Gastrocnemius medialis (tissue), 4 donors: ENCODE measurements at regions of chr4 and their contacts with region 1.

Region 1: GRCh38 chr4:56786955-56787354 is 34.5 kb downstream of the SPINK2 start:
- DNase-seq: peak in 1 of 2 donors; percentile 14
- ATAC-seq: no peak
- H3K4me3 ChIP-seq: no peak overlapping the region
- H3K27ac ChIP-seq: no peak overlapping the region
- H3K4me1 ChIP-seq: no peaks in the 10 kb centered on the region
- H3K27me3 ChIP-seq: peaks cover 0 to 2% (median 0%) of the 10 kb centered on the region in 3 donors
- CTCF ChIP-seq: no peak
- POLR2A ChIP-seq: no peak

Region 2: GRCh38 chr4:56712049-56712448 is 74.9 kb before region 1 on chr4:
- in situ Hi-C with region 1: no loop called
- intact Hi-C with region 1: no loop called
- DNase-seq: no peak
- ATAC-seq: no peak
- H3K4me3 ChIP-seq: no peak overlapping the region
- H3K27ac ChIP-seq: no peak overlapping the region
- H3K4me1 ChIP-seq: no peaks in the 10 kb centered on the region
- H3K27me3 ChIP-seq: no peaks in the 10 kb centered on the region
- CTCF ChIP-seq: no peak
- POLR2A ChIP-seq: no peak

Region 3: DNA sequence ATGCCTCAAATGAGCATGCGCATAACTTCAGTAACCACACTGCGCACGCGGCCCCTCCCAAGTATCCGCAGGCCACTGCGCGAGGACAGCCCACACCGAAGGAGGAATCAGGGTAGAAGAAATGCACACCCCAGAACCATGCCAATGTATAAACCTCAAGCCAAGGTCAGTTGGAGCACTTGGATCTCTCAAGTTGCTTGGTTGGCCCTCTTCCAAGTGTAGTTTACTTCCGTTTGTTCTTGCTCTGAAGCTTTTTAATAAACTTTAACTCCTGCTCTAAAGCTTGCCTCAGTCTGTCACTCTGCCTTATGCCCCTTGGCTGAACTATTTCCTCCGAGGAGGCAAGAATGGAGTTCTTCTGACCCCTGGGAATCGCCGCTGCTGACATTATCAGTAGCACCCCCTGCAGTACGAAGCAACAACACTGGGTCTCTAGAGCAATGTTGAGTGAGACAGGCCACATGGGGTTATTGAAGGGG is 56.5 kb after region 1 on chr4:
- in situ Hi-C with region 1: loop called in 1 of 4 experiments (anchors 10 kb)
- intact Hi-C with region 1: no loop called
- DNase-seq: no peak
- ATAC-seq: no peak
- H3K4me3 ChIP-seq: no peak overlapping the region
- H3K27ac ChIP-seq: no peak overlapping the region
- H3K4me1 ChIP-seq: no peaks in the 10 kb centered on the region
- H3K27me3 ChIP-seq: no peaks in the 10 kb centered on the region
- CTCF ChIP-seq: no peak
- POLR2A ChIP-seq: no peak

Region 4: GRCh38 chr4:57190601-57191481 is 403.9 kb after region 1 on chr4:
- in situ Hi-C with region 1: no loop called
- intact Hi-C with region 1: no loop called
- DNase-seq: no peak
- ATAC-seq: no peak
- H3K4me3 ChIP-seq: no peak overlapping the region
- H3K27ac ChIP-seq: no peak overlapping the region
- H3K4me1 ChIP-seq: no peaks in the 10 kb centered on the region
- H3K27me3 ChIP-seq: no peaks in the 10 kb centered on the region
- CTCF ChIP-seq: peak in 1 of 5 experiments; percentile 36
- POLR2A ChIP-seq: no peak